ENCODE measurements at regions of chr1 and their contacts with region 1.

Region 1: DNA sequence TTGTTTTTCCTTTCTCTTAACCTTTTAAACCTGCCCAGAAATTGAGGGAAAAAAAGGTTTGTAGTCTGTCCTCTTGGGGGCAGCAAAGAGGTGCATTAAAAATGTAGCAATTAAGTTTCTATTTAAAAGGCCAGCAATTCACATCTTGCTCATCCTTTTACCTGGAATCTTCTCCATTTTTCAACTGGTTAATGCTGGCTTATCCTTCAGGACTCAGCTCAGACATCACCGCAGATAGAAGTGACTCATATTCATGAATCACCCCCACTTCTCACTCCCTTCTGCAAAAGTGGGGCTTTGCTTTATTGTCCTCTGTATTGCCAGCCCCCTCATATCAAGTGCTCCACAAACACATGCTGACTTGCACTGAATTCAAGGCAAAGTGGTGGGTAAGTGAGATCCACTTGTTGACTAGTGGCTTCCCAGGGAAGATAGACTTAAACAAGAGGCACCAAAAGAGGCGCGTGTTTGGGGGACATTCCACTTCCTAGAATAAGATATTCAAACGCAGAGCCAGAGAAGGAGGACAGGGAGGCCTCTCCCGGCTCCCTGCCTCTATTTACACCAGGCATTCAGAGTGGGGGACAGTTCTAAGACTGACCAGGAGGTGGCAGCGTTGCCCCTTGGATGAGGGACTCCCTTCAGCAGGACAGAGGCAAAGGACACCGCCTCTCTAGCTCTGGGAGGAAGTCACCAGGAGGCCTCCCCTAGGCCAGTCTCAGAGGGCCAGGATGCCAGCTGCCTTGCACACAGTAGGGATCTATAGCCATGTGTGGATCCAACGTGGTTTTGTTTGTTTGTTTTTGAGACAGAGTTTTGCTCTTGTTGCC is 23.2 kb upstream of the ZNF648 start:
- DNase-seq: peak; percentile 89
- ATAC-seq: peak; percentile 86
- H3K4me3 Mint-ChIP-seq: no peak overlapping the region
- H3K27ac Mint-ChIP-seq: peak overlapping the region; percentile 70
- H3K4me1 Mint-ChIP-seq: peaks cover 54% of the 10 kb centered on the region
- H3K27me3 Mint-ChIP-seq: no peaks in the 10 kb centered on the region

Region 2: DNA sequence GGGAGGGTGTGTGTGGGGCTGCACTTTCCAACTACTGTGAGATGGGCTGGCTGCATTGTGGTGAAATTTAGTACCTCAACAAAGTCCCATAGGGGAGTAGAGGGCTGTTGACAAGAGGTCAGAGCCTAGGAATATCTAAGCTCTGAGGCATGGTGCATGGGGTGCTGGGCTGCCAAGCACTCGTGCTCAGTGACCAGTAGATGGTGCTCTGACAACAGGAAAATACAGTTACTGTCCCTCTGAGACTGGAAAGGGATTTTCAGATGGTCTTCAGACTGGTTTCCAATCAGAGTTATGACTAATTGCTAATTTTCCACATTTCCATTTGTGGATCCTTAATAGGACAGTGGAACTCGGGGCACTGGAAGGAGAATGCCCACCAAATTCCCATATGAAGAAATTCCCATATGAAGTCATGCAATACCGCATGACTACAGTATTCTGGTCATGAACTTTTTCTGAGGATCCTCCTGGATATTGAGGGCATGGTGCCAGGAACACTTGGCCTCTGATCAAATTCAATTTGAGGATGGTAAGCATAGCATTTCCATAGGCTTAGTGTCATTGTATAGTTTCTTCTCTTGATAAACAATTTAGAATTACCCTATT is 605.5 kb before region 1 on chr1:
- CTCF ChIA-PET with region 1: interaction called, 50 read pairs
- POLR2A ChIA-PET with region 1: no interaction called
- DNase-seq: peak; percentile 42
- ATAC-seq: peak; percentile 66
- H3K4me3 Mint-ChIP-seq: no peak overlapping the region
- H3K27ac Mint-ChIP-seq: no peak overlapping the region
- H3K4me1 Mint-ChIP-seq: peaks cover 9% of the 10 kb centered on the region
- H3K27me3 Mint-ChIP-seq: peaks cover 48% of the 10 kb centered on the region

Region 3: GRCh38 chr1:181531951-181532600 is 552.6 kb before region 1 on chr1:
- CTCF ChIA-PET with region 1: no interaction called
- POLR2A ChIA-PET with region 1: no interaction called
- DNase-seq: no peak
- ATAC-seq: no peak
- H3K4me3 Mint-ChIP-seq: no peak overlapping the region
- H3K27ac Mint-ChIP-seq: no peak overlapping the region
- H3K4me1 Mint-ChIP-seq: no peaks in the 10 kb centered on the region
- H3K27me3 Mint-ChIP-seq: peaks cover 5% of the 10 kb centered on the region

Region 4: DNA sequence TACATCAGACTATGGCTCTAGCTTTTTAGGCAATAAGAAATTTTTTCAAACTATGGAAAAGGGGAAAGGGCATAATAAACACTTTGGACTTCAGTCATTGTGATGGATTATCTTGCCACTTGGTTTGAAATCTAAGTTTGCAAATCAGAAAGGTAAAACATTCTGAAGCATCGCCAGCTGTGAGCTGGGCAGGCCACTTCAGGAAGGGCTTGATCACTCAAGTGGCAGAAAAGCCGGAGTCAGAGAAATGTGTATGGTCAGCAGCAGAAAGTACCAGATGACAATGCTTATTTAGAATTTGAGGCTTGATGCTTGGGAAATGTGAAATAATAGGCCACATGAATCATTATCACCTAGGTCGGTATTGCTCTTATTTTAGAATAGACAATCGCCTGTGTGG is 102.9 kb before region 1 on chr1:
- CTCF ChIA-PET with region 1: no interaction called
- POLR2A ChIA-PET with region 1: no interaction called
- DNase-seq: no peak
- ATAC-seq: no peak
- H3K4me3 Mint-ChIP-seq: no peak overlapping the region
- H3K27ac Mint-ChIP-seq: no peak overlapping the region
- H3K4me1 Mint-ChIP-seq: peaks cover 5% of the 10 kb centered on the region
- H3K27me3 Mint-ChIP-seq: peaks cover 40% of the 10 kb centered on the region

Region 5: DNA sequence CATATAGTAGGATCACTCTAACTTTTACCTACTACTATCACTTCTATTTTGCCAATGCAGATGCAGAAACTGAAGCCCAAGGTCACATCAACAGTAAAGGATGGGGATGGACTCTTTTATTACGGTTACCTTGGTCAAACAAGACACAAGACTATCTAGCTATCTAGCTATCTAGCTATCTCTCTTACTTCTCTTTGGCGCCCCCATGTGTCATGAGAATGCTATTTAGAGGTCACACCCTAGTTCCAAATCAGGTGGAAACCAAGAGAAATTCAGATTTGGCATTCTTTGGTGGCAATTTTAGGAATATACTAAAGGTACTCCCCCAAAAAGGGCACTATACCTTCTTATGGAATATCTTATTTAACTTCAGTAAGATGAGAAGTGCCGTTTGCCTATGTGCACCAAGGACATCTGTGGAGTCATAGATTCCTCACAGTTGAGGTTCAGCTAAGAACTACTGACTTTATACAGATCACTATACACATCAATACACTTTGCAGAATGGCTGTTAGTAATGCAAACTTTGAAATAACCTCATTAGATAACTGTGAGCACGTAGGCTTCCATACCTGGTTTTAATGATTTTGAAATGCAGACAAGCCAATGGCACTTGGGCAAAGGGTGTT is 29.9 kb before region 1 on chr1:
- CTCF ChIA-PET with region 1: interaction called, 31 read pairs
- POLR2A ChIA-PET with region 1: no interaction called
- DNase-seq: peak; percentile 79
- ATAC-seq: peak; percentile 72
- H3K4me3 Mint-ChIP-seq: no peak overlapping the region
- H3K27ac Mint-ChIP-seq: no peak overlapping the region
- H3K4me1 Mint-ChIP-seq: peaks cover 26% of the 10 kb centered on the region
- H3K27me3 Mint-ChIP-seq: peaks cover 26% of the 10 kb centered on the region

Region 6: GRCh38 chr1:182069028-182069466 is 15.7 kb before region 1 on chr1:
- CTCF ChIA-PET with region 1: interaction called, 48 read pairs
- POLR2A ChIA-PET with region 1: no interaction called
- DNase-seq: peak; percentile 42
- ATAC-seq: peak; percentile 65
- H3K4me3 Mint-ChIP-seq: no peak overlapping the region
- H3K27ac Mint-ChIP-seq: no peak overlapping the region
- H3K4me1 Mint-ChIP-seq: peaks cover 2% of the 10 kb centered on the region
- H3K27me3 Mint-ChIP-seq: peaks cover 12% of the 10 kb centered on the region

Region 7: GRCh38 chr1:182391362-182392044 is 306.8 kb after region 1 on chr1 and contains the start of gene GLUL:
- CTCF ChIA-PET with region 1: interaction called, 90 read pairs
- POLR2A ChIA-PET with region 1: interaction called, 4 read pairs
- DNase-seq: peak; percentile 79
- ATAC-seq: peak; percentile 79
- H3K4me3 Mint-ChIP-seq: peak within 1 kb of the TSS; percentile 98
- H3K27ac Mint-ChIP-seq: peak within 1 kb of the TSS; percentile 91
- H3K4me1 Mint-ChIP-seq: peaks cover 26% of the 10 kb centered on the region
- H3K27me3 Mint-ChIP-seq: peaks cover 27% of the 10 kb centered on the region
- total RNA-seq, gene GLUL: 97.5 to 98.0 TPM

Region 8: GRCh38 chr1:182595641-182596240 is 511.0 kb after region 1 on chr1:
- CTCF ChIA-PET with region 1: interaction called, 10 read pairs
- POLR2A ChIA-PET with region 1: no interaction called
- DNase-seq: peak; percentile 72
- ATAC-seq: peak; percentile 37
- H3K4me3 Mint-ChIP-seq: no peak overlapping the region
- H3K27ac Mint-ChIP-seq: no peak overlapping the region
- H3K4me1 Mint-ChIP-seq: peaks cover 7% of the 10 kb centered on the region
- H3K27me3 Mint-ChIP-seq: peaks cover 8% of the 10 kb centered on the region

Measured in activated CD8-positive, alpha-beta T cell treated with anti-CD3 and anti-CD28 coated beads, Interleukin-2, amount 10 ng/mL, durations not matched to agents 7 days and 5 days (primary cell).